Lower leg skin (tissue), 4 donors: ENCODE measurements at regions of chrX and their contacts with region 1.

Region 1: DNA sequence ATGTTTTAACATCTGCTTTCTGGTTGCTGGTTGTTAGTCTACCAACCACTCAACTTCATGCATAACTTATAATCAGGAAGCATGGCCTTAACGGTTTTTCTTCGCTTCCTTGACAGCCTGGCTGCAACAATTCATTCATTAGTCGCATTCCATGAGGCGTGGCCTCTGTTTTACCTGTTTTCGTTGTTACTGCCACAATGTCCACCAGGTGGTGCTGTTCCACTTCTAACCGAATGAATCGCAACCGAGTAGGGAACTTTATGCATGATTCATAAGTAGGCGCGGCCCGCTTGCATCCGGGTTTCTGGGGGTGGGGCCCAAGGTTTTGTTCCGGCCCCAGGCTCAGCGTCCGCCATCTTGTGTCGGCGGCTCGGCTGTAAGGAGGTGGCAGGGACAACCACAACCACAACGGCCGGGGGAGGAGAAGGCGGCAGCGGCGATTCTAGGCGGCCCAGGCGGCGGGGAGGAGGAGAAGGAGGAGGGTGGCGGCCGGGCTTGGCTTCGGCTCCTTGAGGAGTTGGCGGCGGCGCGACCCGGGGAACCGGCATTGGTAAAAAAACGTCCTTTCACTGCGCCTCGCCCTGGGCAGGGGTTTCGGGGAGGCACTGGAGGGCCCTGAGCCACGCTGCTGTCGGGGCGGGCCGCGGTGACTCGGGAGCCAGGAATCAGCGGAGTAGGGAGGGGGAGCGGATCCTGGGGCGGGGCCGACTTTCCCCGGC is at the start of gene UBA1:
- DNase-seq: peak; percentile 92 to 100
- H3K4me3 ChIP-seq: peak within 1 kb of the TSS; percentile 47
- CTCF ChIP-seq: peak in 1 of 3 donors; percentile 50
- POLR2A ChIP-seq: peak in 1 of 2 donors; percentile 36
- total RNA-seq, gene UBA1: 112 to 159 (median 121) TPM

Region 2: GRCh38 chrX:47384502-47384901 is 190.9 kb after region 1 on chrX:
- intact Hi-C with region 1: loop called (anchors 10 kb)
- DNase-seq: peak; percentile 39 to 88
- H3K4me3 ChIP-seq: no peak overlapping the region
- CTCF ChIP-seq: no peak
- POLR2A ChIP-seq: no peak

Region 3: DNA sequence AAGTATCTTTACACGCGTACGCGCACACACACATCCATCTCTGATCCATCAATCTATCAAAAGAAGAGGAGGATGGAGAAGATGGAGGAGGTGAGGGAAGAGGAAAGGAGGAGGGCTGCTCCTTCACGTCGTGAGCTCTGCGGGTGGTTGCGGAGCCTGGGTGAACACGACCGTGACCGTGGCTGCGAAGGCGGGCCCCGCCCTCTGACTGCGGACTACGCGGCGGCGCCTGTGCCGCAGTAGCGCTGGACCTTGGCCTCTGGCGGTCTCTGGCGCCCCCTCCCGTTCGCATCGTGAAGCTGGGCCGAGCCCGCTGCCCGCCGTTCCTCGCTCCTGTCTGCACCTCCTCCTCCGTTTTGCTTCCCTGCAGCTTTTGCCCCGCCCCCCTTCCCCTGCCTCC is 329.7 kb after region 1 on chrX:
- intact Hi-C with region 1: loop called (anchors 10 kb)
- DNase-seq: peak; percentile 50 to 95
- H3K4me3 ChIP-seq: peak overlapping the region; percentile 25
- CTCF ChIP-seq: peak in 1 of 3 donors; percentile 18
- POLR2A ChIP-seq: no peak